Activated naive CD4-positive, alpha-beta T cell treated with anti-CD3 and anti-CD28 coated beads, Interleukin-2, amount 10 ng/mL, durations not matched to agents 7 days and 5 days (primary cell): ENCODE measurements at regions of chr2 and their contacts with region 1.

Region 1: GRCh38 chr2:161223139-161223732 is 63.0 kb downstream of the TANK start:
- DNase-seq: no peak
- H3K4me3 Mint-ChIP-seq: no peak overlapping the region
- H3K27ac Mint-ChIP-seq: no peak overlapping the region
- H3K4me1 Mint-ChIP-seq: no peaks in the 10 kb centered on the region
- H3K27me3 Mint-ChIP-seq: no peaks in the 10 kb centered on the region

Region 2: GRCh38 chr2:161233858-161234431 is 10.7 kb after region 1 on chr2:
- CTCF ChIA-PET with region 1: interaction called, 25 read pairs
- DNase-seq: no peak
- H3K4me3 Mint-ChIP-seq: no peak overlapping the region
- H3K27ac Mint-ChIP-seq: no peak overlapping the region
- H3K4me1 Mint-ChIP-seq: peaks cover 21% of the 10 kb centered on the region
- H3K27me3 Mint-ChIP-seq: peaks cover 10% of the 10 kb centered on the region

Region 3: DNA sequence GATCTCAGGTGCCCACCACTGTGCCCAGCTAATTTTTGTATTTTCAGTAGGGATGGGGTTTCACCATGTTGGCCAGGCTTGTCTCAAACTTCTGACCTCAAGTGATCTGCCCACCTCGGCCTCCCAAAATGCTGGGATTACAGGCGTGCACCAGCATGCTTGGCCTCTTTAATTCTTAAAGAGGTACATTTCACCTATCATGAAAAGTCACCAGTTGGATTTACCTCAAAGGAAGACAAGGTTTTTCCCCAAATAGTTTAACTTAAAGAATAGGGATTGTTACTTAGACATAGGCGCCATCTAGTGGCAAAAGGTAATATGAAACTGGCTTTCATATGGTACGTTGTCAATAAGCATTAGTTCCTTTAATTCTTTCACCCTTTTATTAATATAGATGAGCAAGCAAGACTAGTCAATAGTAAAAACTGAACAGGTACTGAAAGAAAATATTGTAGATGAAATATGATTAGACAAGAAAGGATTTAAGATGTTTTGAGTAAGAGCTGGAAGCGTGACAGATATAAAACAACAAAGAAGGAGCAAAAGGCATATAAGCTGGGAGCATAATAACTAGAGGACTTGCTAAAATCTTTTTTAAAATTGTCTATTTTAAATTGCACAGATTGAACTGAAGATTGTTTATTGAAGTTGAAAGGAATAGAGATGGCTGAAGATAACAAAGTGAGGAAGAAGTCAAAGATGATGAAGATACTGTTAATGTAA is 50.0 kb after region 1 on chr2:
- CTCF ChIA-PET with region 1: interaction called, 41 read pairs
- DNase-seq: no peak
- H3K4me3 Mint-ChIP-seq: no peak overlapping the region
- H3K27ac Mint-ChIP-seq: no peak overlapping the region
- H3K4me1 Mint-ChIP-seq: no peaks in the 10 kb centered on the region
- H3K27me3 Mint-ChIP-seq: peaks cover 14% of the 10 kb centered on the region